Gastrocnemius medialis (tissue), 4 donors: ENCODE measurements at regions of chr1 and their contacts with region 1.

Region 1: GRCh38 chr1:26259578-26259977 is 20.3 kb upstream of the SH3BGRL3 start:
- DNase-seq: no peak
- ATAC-seq: no peak
- H3K4me3 ChIP-seq: no peak overlapping the region
- H3K27ac ChIP-seq: peak overlapping the region; percentile 89 to 96 (median 94)
- H3K4me1 ChIP-seq: peaks cover 32 to 36% of the 10 kb centered on the region in 2 donors
- H3K27me3 ChIP-seq: no peaks in the 10 kb centered on the region
- CTCF ChIP-seq: no peak
- POLR2A ChIP-seq: no peak

Region 2: GRCh38 chr1:26279456-26280332 is 20.1 kb after region 1 on chr1 and contains the start of gene SH3BGRL3:
- in situ Hi-C with region 1: no loop called
- intact Hi-C with region 1: loop called (anchors 2 kb)
- DNase-seq: peak; percentile 78 to 82
- ATAC-seq: peak; percentile 27 to 40
- H3K4me3 ChIP-seq: peak within 1 kb of the TSS; percentile 75 to 84 (median 78)
- H3K27ac ChIP-seq: peak within 1 kb of the TSS; percentile 89 to 98 (median 93)
- H3K4me1 ChIP-seq: peaks cover 54 to 67% of the 10 kb centered on the region in 2 donors
- H3K27me3 ChIP-seq: no peaks in the 10 kb centered on the region
- CTCF ChIP-seq: peak in 3 of 5 experiments; percentile 8 to 27 (median 20)
- POLR2A ChIP-seq: peak; percentile 84 to 90
- total RNA-seq, gene SH3BGRL3: 10.3 to 16.9 (median 13.1) TPM